ENCODE measurements at regions of chr17 and their contacts with region 1.

Region 1: GRCh38 chr17:17849845-17850373 is 13.1 kb upstream of the SREBF1 start:
- DNase-seq: peak; percentile 91
- ATAC-seq: peak; percentile 66
- H3K4me3 Mint-ChIP-seq: peak overlapping the region; percentile 50
- H3K27ac Mint-ChIP-seq: peak overlapping the region; percentile 92
- H3K4me1 Mint-ChIP-seq: peaks cover 84% of the 10 kb centered on the region
- H3K27me3 Mint-ChIP-seq: no peaks in the 10 kb centered on the region

Region 2: DNA sequence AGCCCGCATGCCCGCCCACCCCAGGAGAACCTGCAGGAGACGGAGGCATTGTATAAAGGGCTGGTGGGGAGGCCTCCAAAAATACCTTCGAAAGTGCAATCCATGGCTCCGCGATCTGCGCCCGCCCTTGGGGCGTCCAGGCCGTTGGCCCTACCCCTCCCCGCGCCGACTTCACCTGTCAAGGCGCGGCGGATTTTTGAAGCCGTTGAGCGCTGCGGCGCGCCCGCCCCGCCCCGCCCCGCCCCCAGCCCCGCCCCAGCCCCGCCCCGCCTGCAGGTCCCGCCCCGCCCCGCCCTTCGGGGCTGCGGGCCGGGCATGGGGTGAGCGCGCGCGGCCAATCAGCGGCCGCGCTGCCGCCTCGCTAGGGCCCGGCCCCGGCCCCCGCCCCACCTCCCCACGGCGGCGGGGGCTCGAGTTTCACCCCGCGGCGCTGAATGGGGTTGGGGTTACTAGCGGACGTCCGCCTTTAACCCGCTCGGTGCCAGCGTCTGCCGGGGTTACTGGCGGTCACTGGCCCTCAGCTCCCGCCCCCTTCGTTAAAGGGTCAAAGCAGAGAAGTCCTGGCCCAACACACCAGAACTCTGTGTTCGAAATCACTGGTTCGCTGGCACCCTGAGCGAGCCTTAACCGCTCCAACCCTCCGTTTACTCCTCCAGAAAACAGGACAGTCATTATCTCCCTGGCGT is 26.3 kb before region 1 on chr17:
- CTCF ChIA-PET with region 1: interaction called, 16 read pairs
- POLR2A ChIA-PET with region 1: interaction called, 35 read pairs
- DNase-seq: peak; percentile 90
- ATAC-seq: peak; percentile 84
- H3K4me3 Mint-ChIP-seq: peak overlapping the region; percentile 83
- H3K27ac Mint-ChIP-seq: peak overlapping the region; percentile 91
- H3K4me1 Mint-ChIP-seq: peaks cover 92% of the 10 kb centered on the region
- H3K27me3 Mint-ChIP-seq: no peaks in the 10 kb centered on the region

Measured in activated CD8-positive, alpha-beta T cell treated with anti-CD3 and anti-CD28 coated beads, Interleukin-2, amount 10 ng/mL, durations not matched to agents 7 days and 5 days (primary cell).